ENCODE measurements at regions of chr14 and their contacts with region 1.

Region 1: GRCh38 chr14:77053046-77053841 is 24.7 kb upstream of the IRF2BPL start:
- DNase-seq: peak; percentile 83
- CTCF ChIP-seq: peak; percentile 84

Region 2: GRCh38 chr14:76904740-76905438 is 148.4 kb before region 1 on chr14:
- CTCF ChIA-PET with region 1: interaction called, 247 read pairs
- POLR2A ChIA-PET with region 1: no interaction called
- DNase-seq: peak; percentile 75
- CTCF ChIP-seq: no peak

Region 3: GRCh38 chr14:76937181-76938091 is 115.8 kb before region 1 on chr14:
- CTCF ChIA-PET with region 1: interaction called, 12 read pairs
- POLR2A ChIA-PET with region 1: no interaction called
- DNase-seq: no peak
- CTCF ChIP-seq: no peak

Region 4: GRCh38 chr14:76953196-76954000 is 99.8 kb before region 1 on chr14:
- CTCF ChIA-PET with region 1: interaction called, 12 read pairs
- POLR2A ChIA-PET with region 1: no interaction called
- DNase-seq: peak; percentile 59
- CTCF ChIP-seq: no peak

Region 5: GRCh38 chr14:77040059-77040740 is 13.0 kb before region 1 on chr14:
- CTCF ChIA-PET with region 1: interaction called, 66 read pairs
- POLR2A ChIA-PET with region 1: no interaction called
- DNase-seq: peak; percentile 69
- CTCF ChIP-seq: no peak

Region 6: DNA sequence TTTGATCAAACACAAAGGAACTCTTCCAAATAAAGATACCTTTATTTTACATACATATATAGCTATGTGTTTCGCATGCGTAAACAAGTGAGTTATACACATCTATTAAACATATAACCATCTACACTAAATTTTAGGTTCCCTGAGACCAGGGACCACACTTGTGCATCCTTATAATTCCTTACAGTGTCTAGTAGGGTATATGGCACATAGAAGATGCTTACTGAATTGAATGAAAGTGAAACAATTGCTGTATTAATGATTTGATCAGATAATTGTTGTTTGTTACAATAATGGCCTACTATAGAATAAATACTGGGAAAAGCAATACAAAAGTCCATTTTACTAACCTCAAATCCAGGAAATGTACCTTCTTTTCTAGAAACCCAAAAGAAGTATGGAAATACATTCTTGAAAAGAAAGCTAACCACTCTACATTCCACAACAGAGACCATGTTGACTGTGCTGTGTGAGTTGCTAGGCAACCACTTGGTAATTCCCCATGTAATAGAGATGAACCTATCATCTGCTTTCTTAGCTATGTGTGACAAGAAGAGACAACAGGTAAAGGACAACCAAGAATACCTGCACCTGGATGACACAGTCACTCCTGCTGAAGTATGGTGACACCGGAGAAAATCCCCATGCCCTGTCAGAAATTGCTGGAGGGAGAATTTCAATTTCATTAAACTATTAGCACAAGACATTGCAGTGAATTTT is 32.9 kb after region 1 on chr14:
- CTCF ChIA-PET with region 1: interaction called, 14 read pairs
- POLR2A ChIA-PET with region 1: no interaction called
- DNase-seq: peak; percentile 46
- CTCF ChIP-seq: no peak

Region 7: DNA sequence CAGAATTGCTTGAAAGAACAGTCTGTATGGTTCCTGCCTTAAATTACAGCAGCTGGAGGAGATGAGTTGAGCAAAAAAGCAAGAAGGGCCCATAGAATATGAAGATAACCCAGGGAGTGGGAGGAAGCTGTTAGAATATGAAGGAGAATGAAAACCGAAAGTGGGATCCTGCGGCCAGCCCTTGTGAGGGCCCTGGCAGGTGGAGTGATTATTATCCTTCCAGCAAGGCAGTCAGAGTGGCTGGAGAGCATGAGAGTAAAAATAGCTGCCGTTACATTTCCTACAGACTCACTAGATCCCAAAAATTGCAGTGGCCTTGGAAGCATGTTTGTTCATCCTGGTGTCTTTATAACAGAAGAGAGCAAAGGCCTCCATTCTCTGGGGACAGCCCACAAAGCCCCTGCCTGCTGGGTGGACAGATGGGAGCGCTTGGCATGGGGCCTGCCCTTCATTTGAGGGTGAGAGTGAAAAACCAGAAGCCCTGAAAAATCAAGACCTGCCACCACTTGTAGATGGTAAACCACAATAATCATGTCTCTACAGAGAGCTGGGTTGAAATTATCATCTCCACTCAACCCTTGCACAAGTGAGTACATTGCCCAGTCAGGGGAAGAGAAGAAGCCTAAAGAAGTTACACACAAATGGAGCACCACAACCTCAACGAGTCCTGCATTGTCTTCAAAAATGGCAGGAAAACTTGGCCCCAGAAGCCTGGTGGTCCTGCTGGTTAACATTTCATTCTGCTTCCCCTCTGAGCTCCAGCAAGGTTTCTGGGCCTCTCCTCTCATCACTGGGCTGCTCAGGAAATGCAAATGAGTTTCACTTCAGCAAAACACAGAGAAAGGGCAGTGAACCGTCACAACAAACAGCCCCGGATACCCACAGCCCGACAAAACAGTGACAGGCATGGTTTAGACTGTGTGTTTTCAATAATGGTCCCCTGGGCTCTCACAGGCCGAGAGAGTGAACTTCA is 67.8 kb after region 1 on chr14:
- CTCF ChIA-PET with region 1: no interaction called
- POLR2A ChIA-PET with region 1: no interaction called
- DNase-seq: peak; percentile 77
- CTCF ChIP-seq: no peak

Region 8: GRCh38 chr14:77248666-77249065 is 195.4 kb after region 1 on chr14:
- CTCF ChIA-PET with region 1: no interaction called
- POLR2A ChIA-PET with region 1: no interaction called
- DNase-seq: no peak
- CTCF ChIP-seq: no peak

Measured in GM10248 (cell line).